ENCODE measurements at regions of chr3 and their contacts with region 1.

Region 1: DNA sequence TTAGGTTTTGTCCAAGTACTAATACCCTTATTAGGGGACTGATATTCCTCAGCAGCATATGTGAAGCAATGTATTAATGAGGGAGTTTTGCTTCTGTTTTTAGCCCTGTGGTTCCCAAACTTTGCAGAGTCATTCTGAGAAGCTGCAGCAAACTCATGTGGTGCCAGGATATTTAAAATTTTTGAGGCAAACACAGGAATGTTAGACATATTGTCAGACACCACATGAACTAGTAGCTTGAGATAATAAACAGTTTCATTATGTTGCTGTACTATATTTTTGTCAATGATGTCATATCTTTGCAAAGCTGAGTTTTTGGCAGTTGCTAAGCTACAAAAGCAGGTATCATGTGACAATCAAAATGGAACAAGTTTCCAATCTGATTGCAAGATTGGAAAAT is 36.6 kb downstream of the ATP6V1A start:
- DNase-seq: no peak
- ATAC-seq: peak; percentile 45
- H3K4me3 Mint-ChIP-seq: no peak overlapping the region
- H3K27ac Mint-ChIP-seq: no peak overlapping the region
- H3K4me1 Mint-ChIP-seq: peaks cover 13% of the 10 kb centered on the region
- H3K27me3 Mint-ChIP-seq: no peaks in the 10 kb centered on the region
- CTCF ChIP-seq: no peak

Region 2: DNA sequence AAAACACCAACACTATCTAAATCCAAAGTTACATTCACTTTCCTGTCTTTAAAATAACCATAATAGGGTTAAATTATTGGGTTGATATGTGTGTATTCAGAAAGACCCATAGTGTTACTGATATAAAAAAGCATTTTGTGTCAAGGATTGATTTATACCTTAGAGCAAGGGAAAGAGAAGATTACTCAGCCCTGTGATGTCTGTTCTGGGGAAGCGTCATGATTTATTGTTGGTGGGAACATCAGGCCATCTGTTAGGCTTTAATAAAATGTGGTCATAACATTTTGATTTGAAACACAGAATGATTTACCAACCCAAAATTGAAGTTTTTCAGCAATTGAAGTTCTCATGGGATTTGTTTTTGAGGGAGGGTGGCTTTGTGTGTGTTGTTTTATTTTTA is 217.9 kb before region 1 on chr3:
- CTCF ChIA-PET with region 1: no interaction called
- POLR2A ChIA-PET with region 1: no interaction called
- intact Hi-C with region 1: no loop called
- DNase-seq: no peak
- ATAC-seq: no peak
- H3K4me3 Mint-ChIP-seq: no peak overlapping the region
- H3K27ac Mint-ChIP-seq: no peak overlapping the region
- H3K4me1 Mint-ChIP-seq: peaks cover 7% of the 10 kb centered on the region
- H3K27me3 Mint-ChIP-seq: no peaks in the 10 kb centered on the region
- CTCF ChIP-seq: no peak

Region 3: DNA sequence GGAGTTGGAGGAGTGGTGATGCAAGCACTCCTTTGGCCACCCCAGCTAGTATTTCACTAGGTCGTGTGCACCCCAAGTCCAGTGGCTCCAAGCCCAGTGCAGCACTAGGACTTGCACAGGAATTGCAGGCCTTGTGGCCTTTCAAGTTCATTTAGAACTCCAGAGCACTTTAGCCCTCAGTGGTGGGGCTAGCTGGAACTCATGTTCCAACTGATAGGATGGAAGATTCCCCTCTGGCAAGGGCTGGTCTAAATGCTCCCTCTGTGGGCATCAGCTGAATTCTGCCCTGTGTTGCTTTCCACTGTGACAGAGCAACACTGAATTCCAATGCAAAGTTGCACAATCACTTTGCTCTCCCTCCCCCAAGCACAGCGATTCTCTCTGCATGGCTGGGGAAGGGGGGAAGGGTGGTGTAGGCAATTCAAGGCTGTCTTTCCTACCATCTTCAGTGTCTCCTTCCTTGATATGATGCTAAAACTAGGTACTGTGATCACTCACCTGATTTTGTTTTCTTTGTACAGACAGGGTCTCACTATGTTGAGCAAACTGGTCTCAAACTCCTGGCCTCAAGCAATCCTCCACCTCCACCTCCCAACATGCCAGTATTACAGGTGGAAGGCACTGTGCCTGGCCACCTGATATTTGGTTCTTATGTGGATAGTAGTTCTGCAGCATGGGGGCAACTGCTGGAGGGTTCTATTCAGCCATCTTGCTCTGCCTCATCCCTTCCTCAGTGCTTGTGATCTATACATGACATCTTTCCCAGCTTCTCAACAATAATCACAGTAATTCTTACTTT is 97.3 kb before region 1 on chr3:
- CTCF ChIA-PET with region 1: no interaction called
- POLR2A ChIA-PET with region 1: no interaction called
- intact Hi-C with region 1: no loop called
- DNase-seq: no peak
- ATAC-seq: no peak
- H3K4me3 Mint-ChIP-seq: no peak overlapping the region
- H3K27ac Mint-ChIP-seq: no peak overlapping the region
- H3K4me1 Mint-ChIP-seq: peaks cover 26% of the 10 kb centered on the region
- H3K27me3 Mint-ChIP-seq: no peaks in the 10 kb centered on the region
- CTCF ChIP-seq: no peak

Region 4: GRCh38 chr3:113769551-113769950 is 13.9 kb before region 1 on chr3:
- CTCF ChIA-PET with region 1: no interaction called
- POLR2A ChIA-PET with region 1: no interaction called
- intact Hi-C with region 1: loop called (anchors 2 kb)
- DNase-seq: no peak
- ATAC-seq: peak; percentile 28
- H3K4me3 Mint-ChIP-seq: no peak overlapping the region
- H3K27ac Mint-ChIP-seq: no peak overlapping the region
- H3K4me1 Mint-ChIP-seq: peaks cover 6% of the 10 kb centered on the region
- H3K27me3 Mint-ChIP-seq: no peaks in the 10 kb centered on the region
- CTCF ChIP-seq: no peak

Region 5: DNA sequence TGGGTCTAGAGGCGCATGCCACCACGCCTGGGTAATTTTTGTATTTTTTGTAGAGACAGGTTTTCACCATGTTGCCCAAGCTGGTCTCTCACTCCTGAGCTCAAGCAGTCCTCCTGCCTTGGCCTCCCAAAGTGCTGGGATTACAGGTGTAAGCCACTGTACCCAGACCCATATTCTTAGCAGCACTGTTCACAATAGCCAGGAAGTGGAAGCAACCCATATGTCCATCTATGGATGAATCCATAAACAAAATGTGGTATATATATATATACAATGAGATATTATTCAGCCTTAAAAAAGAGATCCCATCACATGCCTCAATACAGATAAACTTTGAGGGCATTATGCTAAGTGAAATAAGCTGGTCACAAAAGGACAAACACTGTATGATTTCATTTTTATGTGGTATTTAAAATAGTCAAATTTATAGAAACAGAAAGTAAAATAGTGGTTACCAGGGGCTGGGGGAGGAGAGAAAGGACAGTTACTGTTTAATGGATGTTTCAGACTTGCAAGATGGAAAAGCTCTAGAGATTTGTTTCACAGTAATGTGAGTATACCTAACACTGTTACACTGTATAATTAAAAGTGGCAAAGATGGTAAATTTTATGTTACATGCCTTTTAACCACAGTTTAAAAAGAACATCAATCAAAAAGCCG is 19.5 kb after region 1 on chr3:
- CTCF ChIA-PET with region 1: no interaction called
- POLR2A ChIA-PET with region 1: interaction called, 4 read pairs
- intact Hi-C with region 1: loop called (anchors 2 kb)
- DNase-seq: no peak
- ATAC-seq: peak; percentile 58
- H3K4me3 Mint-ChIP-seq: peak overlapping the region; percentile 1
- H3K27ac Mint-ChIP-seq: peak overlapping the region; percentile 65
- H3K4me1 Mint-ChIP-seq: peaks cover 25% of the 10 kb centered on the region
- H3K27me3 Mint-ChIP-seq: no peaks in the 10 kb centered on the region
- CTCF ChIP-seq: no peak

Measured in activated B cell treated with CpG ODN at 0.5 μM for 24 hours (primary cell).